Head of caudate nucleus (tissue), 42 donors: ENCODE measurements at regions of chr10 and their contacts with region 1.

Region 1: GRCh38 chr10:33010132-33011037 is 52.4 kb upstream of the ITGB1 start:
- DNase-seq: no peak

Region 2: DNA sequence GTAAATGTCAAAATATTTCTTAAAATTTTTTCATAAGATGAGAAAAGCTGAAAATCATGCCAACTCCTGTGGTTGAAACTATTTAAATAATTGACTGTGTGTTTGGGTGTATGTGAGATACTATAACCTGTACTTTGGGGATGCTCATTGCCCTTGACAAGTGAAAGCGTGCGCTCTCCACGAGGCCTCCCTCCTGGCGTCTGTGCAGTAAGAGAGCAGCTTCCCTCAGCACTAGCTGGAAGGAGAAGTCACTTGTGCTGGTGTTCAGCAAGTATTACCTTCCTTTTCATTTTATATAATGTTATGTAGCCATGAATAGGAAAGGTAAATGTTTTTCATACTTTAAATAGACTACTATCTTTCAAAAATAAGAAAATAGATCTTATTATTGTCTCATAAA is 1572.4 kb before region 1 on chr10:
- intact Hi-C with region 1: no loop called
- DNase-seq: no peak

Region 3: GRCh38 chr10:32795598-32796183 is 214.7 kb before region 1 on chr10:
- intact Hi-C with region 1: loop called (anchors 5 kb)
- DNase-seq: peak in 1 of 42 donors; percentile 26